ENCODE measurements at regions of chr1 and their contacts with region 1.

Region 1: GRCh38 chr1:117605774-117606648 is at the start of gene TENT5C:
- DNase-seq: peak; percentile 99 to 100 (median 99)
- H3K4me3 ChIP-seq: peak within 1 kb of the TSS; percentile 93 to 98
- H3K4me3 Mint-ChIP-seq: peak within 1 kb of the TSS; percentile 91 to 100 (median 98)
- H3K27ac ChIP-seq: peak within 1 kb of the TSS; percentile 92
- H3K27ac Mint-ChIP-seq: peak within 1 kb of the TSS; percentile 94 to 100 (median 99)
- H3K4me1 ChIP-seq: peaks cover 43% of the 10 kb centered on the region
- H3K4me1 Mint-ChIP-seq: peaks cover 28 to 59% (median 37%) of the 10 kb centered on the region in 4 donors
- H3K27me3 ChIP-seq: no peaks in the 10 kb centered on the region
- H3K27me3 Mint-ChIP-seq: no peaks in the 10 kb centered on the region
- total RNA-seq, gene TENT5C: 13.9 to 14.8 TPM

Region 2: GRCh38 chr1:116754198-116754977 is 851.6 kb before region 1 on chr1 and contains the start of gene CD2:
- CTCF ChIA-PET with region 1: no interaction called
- POLR2A ChIA-PET with region 1: interaction called, 6 read pairs
- intact Hi-C with region 1: loop called (anchors 10 kb)
- DNase-seq: peak; percentile 66 to 74 (median 71)
- H3K4me3 ChIP-seq: peak within 1 kb of the TSS; percentile 53 to 72
- H3K4me3 Mint-ChIP-seq: peak within 1 kb of the TSS; percentile 96 to 100 (median 98)
- H3K27ac ChIP-seq: peak within 1 kb of the TSS; percentile 88
- H3K27ac Mint-ChIP-seq: peak within 1 kb of the TSS; percentile 96 to 100 (median 99)
- H3K4me1 ChIP-seq: peaks cover 34% of the 10 kb centered on the region
- H3K4me1 Mint-ChIP-seq: peaks cover 25 to 64% (median 33%) of the 10 kb centered on the region in 4 donors
- H3K27me3 ChIP-seq: no peaks in the 10 kb centered on the region
- H3K27me3 Mint-ChIP-seq: no peaks in the 10 kb centered on the region
- total RNA-seq, gene CD2: 305 to 316 TPM

Region 3: DNA sequence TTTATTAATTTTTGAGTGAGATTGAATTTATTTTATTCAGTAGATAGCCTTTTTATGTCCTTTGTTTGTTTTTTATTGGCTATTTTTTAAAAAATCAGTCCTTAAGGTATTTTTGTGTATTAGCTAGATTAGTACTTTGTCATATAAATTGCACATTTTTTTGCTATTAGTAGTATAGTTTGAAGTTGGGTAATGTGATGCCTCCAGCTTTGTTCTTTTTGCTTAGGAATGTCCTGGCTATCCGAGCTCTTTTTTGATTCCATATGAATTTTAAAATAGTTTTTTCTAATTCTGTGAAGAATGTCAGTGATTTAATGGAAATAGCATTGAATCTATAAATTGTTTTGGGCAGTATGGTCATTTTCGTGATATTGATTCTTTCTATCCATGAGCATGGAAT is 158.3 kb before region 1 on chr1:
- CTCF ChIA-PET with region 1: no interaction called
- POLR2A ChIA-PET with region 1: no interaction called
- intact Hi-C with region 1: no loop called
- DNase-seq: no peak
- H3K4me3 ChIP-seq: no peak overlapping the region
- H3K4me3 Mint-ChIP-seq: no peak overlapping the region
- H3K27ac ChIP-seq: no peak overlapping the region
- H3K27ac Mint-ChIP-seq: peak overlapping the region in 1 of 7 donors; percentile 46
- H3K4me1 ChIP-seq: no peaks in the 10 kb centered on the region
- H3K4me1 Mint-ChIP-seq: peaks cover 0 to 2% (median 0%) of the 10 kb centered on the region in 4 donors
- H3K27me3 ChIP-seq: no peaks in the 10 kb centered on the region
- H3K27me3 Mint-ChIP-seq: no peaks in the 10 kb centered on the region

Region 4: GRCh38 chr1:117622726-117623125 is 16.7 kb after region 1 on chr1:
- CTCF ChIA-PET with region 1: interaction called, 3 read pairs
- POLR2A ChIA-PET with region 1: interaction called, 27 read pairs
- intact Hi-C with region 1: no loop called
- DNase-seq: no peak
- H3K4me3 ChIP-seq: no peak overlapping the region
- H3K4me3 Mint-ChIP-seq: no peak overlapping the region
- H3K27ac ChIP-seq: no peak overlapping the region
- H3K27ac Mint-ChIP-seq: peak overlapping the region in 1 of 7 donors; percentile 74
- H3K4me1 ChIP-seq: peaks cover 54% of the 10 kb centered on the region
- H3K4me1 Mint-ChIP-seq: peaks cover 34 to 70% (median 55%) of the 10 kb centered on the region in 4 donors
- H3K27me3 ChIP-seq: no peaks in the 10 kb centered on the region
- H3K27me3 Mint-ChIP-seq: no peaks in the 10 kb centered on the region

Region 5: GRCh38 chr1:117644696-117645311 is 38.8 kb after region 1 on chr1:
- CTCF ChIA-PET with region 1: interaction called, 4 read pairs
- POLR2A ChIA-PET with region 1: interaction called, 12 read pairs
- intact Hi-C with region 1: no loop called
- DNase-seq: no peak
- H3K4me3 ChIP-seq: no peak overlapping the region
- H3K4me3 Mint-ChIP-seq: peak overlapping the region in 1 of 8 donors; percentile 33
- H3K27ac ChIP-seq: no peak overlapping the region
- H3K27ac Mint-ChIP-seq: peak overlapping the region in 1 of 7 donors; percentile 33
- H3K4me1 ChIP-seq: peaks cover 21% of the 10 kb centered on the region
- H3K4me1 Mint-ChIP-seq: peaks cover 6 to 30% (median 14%) of the 10 kb centered on the region in 4 donors
- H3K27me3 ChIP-seq: no peaks in the 10 kb centered on the region
- H3K27me3 Mint-ChIP-seq: peaks cover 0 to 3% of the 10 kb centered on the region in 2 donors

Region 6: DNA sequence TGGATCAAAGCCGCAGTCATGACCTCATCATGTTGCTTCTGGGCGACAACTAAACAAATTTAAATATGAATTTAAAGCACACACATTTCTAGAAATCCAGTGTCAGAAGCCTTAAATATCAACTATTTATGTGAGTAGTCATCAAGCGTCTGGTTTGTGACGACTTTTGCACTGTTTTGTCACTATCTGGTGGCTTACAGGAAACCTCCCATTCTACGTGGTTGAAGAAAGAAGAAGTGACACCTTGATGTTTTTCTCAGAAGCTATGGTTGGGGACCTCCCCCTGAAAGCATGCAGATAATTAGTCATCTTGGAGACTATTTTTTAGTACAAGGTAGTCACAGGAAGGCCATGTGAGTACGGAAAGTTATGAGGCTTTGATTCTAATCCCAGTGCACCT is 58.3 kb after region 1 on chr1:
- CTCF ChIA-PET with region 1: interaction called, 135 read pairs
- POLR2A ChIA-PET with region 1: interaction called, 493 read pairs
- intact Hi-C with region 1: loop called (anchors 1 kb)
- DNase-seq: peak; percentile 84 to 92 (median 89)
- H3K4me3 ChIP-seq: no peak overlapping the region
- H3K4me3 Mint-ChIP-seq: peak overlapping the region in 6 of 8 donors; percentile 29 to 82 (median 64)
- H3K27ac ChIP-seq: peak overlapping the region; percentile 71
- H3K27ac Mint-ChIP-seq: peak overlapping the region; percentile 86 to 99 (median 98)
- H3K4me1 ChIP-seq: peaks cover 77% of the 10 kb centered on the region
- H3K4me1 Mint-ChIP-seq: peaks cover 60 to 89% (median 73%) of the 10 kb centered on the region in 4 donors
- H3K27me3 ChIP-seq: no peaks in the 10 kb centered on the region
- H3K27me3 Mint-ChIP-seq: no peaks in the 10 kb centered on the region

Region 7: GRCh38 chr1:117735045-117735992 is 129.3 kb after region 1 on chr1:
- CTCF ChIA-PET with region 1: no interaction called
- POLR2A ChIA-PET with region 1: interaction called, 7 read pairs
- intact Hi-C with region 1: loop called (anchors 5 kb)
- DNase-seq: peak; percentile 39 to 56 (median 52)
- H3K4me3 ChIP-seq: peak overlapping the region; percentile 26 to 44
- H3K4me3 Mint-ChIP-seq: peak overlapping the region; percentile 63 to 95 (median 88)
- H3K27ac ChIP-seq: peak overlapping the region; percentile 45
- H3K27ac Mint-ChIP-seq: peak overlapping the region; percentile 66 to 96 (median 94)
- H3K4me1 ChIP-seq: peaks cover 14% of the 10 kb centered on the region
- H3K4me1 Mint-ChIP-seq: peaks cover 10 to 24% (median 20%) of the 10 kb centered on the region in 4 donors
- H3K27me3 ChIP-seq: no peaks in the 10 kb centered on the region
- H3K27me3 Mint-ChIP-seq: no peaks in the 10 kb centered on the region

Region 8: DNA sequence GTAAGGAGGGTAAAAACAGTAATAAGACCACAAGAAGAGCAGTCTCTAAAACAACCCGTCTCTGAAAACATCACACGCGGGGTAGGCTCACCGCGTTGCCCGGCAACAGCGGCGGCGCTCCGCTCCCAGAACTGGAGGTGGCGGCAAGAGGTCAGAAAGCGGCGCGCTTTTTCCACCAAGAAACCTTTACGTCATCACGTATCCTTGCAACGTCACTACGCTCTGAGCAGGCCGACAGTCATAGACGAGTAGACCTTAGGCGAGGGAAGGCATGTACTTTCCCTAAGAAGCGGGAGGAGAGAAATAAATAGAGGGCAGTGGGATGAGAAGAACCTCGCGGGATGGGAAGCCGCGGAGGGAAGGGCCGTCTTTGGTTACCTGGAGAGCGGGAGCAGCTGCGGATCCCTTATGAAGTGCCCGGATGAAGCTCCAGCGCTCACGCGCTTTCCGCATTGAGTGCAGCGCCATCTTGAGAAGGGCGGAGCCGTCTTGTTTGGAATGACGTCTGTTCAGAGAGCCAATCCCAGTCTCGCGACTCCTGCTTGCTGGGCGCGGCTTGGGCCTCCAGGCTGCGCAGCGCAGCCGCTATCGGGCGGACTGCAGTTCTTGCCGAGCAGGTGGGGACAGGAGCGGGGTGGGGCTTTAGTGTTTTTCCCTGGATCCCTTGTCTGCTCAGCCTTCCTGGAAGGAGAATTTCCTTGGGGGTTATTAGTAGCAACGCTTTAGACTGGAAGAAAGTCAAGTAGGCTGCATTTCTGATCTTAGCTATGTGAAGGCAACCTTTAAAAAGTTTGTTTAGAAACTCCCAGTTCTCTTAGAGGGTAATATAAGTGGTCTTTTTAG is 1534.4 kb after region 1 on chr1 and contains the start of gene WARS2:
- CTCF ChIA-PET with region 1: no interaction called
- POLR2A ChIA-PET with region 1: no interaction called
- intact Hi-C with region 1: loop called (anchors 5 kb)
- DNase-seq: peak; percentile 97 to 98 (median 97)
- H3K4me3 ChIP-seq: peak within 1 kb of the TSS; percentile 63 to 67
- H3K4me3 Mint-ChIP-seq: no peak within 1 kb of the TSS
- H3K27ac ChIP-seq: peak within 1 kb of the TSS; percentile 97
- H3K27ac Mint-ChIP-seq: no peak within 1 kb of the TSS
- H3K4me1 ChIP-seq: peaks cover 27% of the 10 kb centered on the region
- H3K4me1 Mint-ChIP-seq: peaks cover 5 to 36% (median 16%) of the 10 kb centered on the region in 4 donors
- H3K27me3 ChIP-seq: no peaks in the 10 kb centered on the region
- H3K27me3 Mint-ChIP-seq: no peaks in the 10 kb centered on the region
- total RNA-seq, gene WARS2: 6.9 to 9.5 TPM